ENCODE measurements at regions of chr9 and their contacts with region 1.

Region 1: DNA sequence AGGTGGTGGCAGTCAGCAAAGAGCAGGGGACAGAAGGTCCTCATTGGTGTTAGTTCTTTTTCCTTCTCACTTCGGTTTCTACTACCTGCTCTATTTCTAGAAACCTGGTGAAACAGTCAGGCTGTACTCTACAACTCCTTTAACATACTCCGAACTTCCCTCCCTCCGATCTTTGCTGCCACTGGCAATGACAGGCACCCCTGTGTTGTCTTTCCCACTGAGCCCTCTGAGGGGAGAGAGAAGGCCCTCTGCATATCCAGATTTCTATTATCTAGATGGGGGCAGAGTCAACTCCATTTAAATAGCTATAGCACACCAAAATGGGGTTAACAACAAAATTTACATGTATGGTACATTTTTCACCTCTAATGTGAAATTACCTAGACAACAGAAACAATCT is 123.7 kb downstream of the CDK5RAP2 start:
- DNase-seq: no peak
- ATAC-seq: no peak
- H3K4me3 ChIP-seq: no peak overlapping the region
- H3K27ac ChIP-seq: no peak overlapping the region
- H3K4me1 ChIP-seq: no peaks in the 10 kb centered on the region
- H3K27me3 ChIP-seq: no peaks in the 10 kb centered on the region

Region 2: DNA sequence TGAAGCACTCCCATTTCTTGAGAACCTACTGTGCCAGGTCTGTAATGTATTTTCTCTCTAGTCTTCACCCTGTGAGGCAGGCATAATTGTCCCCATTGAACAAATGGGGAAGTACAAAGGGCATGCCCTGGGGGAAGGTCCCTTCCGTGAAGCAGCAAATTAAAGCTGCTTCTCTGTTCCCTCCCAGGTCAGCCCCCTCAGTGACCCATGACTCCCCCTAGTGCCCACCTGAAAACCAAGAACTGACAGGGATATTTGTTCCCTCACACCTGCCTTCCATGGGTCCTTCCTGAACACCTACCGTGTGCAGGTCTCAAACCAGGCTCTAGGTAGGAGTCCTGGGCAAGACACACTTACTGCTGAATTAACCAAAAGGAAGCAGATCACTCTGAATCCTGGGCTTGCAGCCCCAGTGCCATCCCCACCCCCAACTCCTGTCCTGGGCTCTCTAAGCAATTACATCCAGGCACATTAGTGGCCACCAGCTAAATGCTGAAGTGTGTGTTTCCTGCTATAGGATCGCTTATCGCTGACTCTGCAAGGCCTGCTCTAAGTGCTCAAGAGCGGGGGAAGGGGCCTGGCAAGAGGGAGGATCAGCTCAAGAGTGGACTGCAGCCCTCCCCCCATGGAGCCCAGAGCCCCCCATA is 131.1 kb before region 1 on chr9:
- intact Hi-C with region 1: no loop called
- DNase-seq: no peak
- ATAC-seq: no peak
- H3K4me3 ChIP-seq: no peak overlapping the region
- H3K27ac ChIP-seq: no peak overlapping the region
- H3K4me1 ChIP-seq: no peaks in the 10 kb centered on the region
- H3K27me3 ChIP-seq: no peaks in the 10 kb centered on the region

Region 3: DNA sequence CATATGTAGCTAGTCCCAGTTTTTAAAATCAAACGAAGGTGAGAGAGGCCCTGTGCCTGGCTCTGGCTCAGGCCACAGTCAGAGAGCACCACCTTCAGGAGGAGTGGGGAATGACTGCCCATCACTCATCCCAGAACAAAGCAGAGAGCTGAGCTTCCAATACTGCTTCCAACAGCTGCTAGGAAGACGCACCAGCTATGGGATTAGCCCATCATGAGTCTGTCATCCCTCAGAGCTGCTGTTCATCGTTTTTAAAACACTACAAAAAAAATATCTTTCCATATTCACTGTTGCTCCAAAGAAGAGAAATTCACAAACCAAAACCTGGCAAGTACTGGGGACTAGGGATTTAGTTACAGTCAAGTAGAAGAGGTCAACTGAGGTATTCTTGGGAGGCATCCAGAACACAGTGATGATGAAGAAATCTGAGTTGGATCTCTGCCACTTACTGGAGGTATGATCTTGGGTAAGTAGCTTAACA is 21.3 kb after region 1 on chr9:
- intact Hi-C with region 1: loop called in 1 of 4 experiments (anchors 2 kb)
- DNase-seq: peak; percentile 58 to 80 (median 76)
- ATAC-seq: peak; percentile 83 to 86
- H3K4me3 ChIP-seq: no peak overlapping the region
- H3K27ac ChIP-seq: no peak overlapping the region
- H3K4me1 ChIP-seq: no peaks in the 10 kb centered on the region
- H3K27me3 ChIP-seq: no peaks in the 10 kb centered on the region